ENCODE measurements at regions of chr7 and their contacts with region 1.

Region 1: DNA sequence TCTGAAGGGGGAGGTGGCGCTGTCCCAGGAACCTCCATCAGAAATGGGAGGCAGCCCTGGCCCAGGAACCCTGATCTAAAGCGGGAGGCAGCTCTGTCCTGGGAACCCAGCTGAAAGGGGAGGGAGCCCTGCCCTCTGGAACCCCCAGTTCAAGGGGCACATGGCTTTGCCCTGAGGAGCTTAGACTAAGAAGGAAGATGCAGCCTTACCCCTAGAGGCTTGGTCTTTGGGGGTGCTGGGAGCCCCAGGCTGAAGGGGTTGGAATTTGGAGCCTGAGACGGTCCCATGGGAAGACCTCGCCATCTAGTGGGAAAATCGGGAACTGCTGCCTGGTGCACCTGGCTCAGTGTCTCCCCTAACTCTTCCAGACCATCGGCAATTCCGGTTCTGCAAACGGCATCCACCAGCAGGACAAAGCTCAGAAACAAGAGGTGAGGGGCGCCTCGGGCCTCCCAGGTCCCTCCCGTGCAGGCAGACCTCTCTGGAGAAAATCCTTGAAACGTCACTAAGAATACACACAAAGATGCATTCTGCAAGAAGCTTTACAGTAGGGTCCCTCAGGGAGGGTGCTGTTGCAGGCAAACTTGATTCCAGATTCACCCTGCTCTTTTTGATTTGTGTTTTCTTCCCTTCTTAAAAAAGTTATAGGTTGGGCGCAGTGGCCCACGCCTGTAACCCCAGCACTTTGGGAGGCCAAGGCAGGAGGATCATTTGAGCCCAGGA is 52.4 kb upstream of the GTF2IRD1 start:
- ATAC-seq: peak; percentile 47 to 92 (median 65)
- H3K4me3 ChIP-seq: no peak overlapping the region
- H3K27ac ChIP-seq: no peak overlapping the region
- H3K4me1 ChIP-seq: no peaks in the 10 kb centered on the region

Region 2: DNA sequence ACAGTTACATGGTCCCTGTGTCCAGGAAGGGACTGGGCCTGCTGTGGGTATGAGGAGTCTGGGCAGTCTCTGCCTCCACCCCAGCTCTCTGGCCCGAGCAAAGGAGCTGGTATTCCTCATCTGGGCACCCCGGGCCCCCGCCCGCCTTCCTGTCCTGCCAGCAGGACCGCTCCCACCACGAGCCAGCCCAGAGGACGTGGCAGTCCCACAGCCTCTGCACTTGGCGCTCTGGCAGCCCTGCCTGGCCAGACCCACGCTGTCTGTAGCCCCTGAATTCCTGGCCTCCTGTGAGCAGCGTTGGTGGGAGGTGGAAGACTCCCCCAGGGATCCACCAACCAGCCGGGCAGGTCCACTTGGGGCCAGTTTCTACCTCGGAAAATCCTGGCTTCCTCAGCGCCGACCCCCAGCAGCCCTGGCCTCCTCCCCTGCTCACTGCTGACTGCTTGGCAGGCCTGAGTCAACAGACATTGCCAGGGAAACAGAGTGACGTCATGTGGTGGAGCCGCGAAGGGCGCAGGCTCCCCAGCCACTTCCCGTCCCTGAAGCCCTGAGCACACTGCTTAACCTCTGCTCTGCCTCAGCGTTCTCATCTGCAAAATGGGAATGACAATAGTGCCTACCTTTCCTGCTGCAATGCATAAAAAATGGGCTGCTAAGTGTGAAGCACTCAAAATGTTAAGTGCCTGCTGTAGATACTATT is 339.3 kb before region 1 on chr7:
- in situ Hi-C with region 1: loop called in 2 of 9 experiments (anchors 25 kb)
- ATAC-seq: peak; percentile 63 to 99 (median 88)
- H3K4me3 ChIP-seq: no peak overlapping the region
- H3K27ac ChIP-seq: no peak overlapping the region
- H3K4me1 ChIP-seq: no peaks in the 10 kb centered on the region

Region 3: GRCh38 chr7:74070619-74070921 is 330.7 kb before region 1 on chr7:
- in situ Hi-C with region 1: loop called in 3 of 9 experiments (anchors 10 to 25 kb)
- ATAC-seq: peak in 3 of 8 experiments; percentile 54 to 64 (median 56)
- H3K4me3 ChIP-seq: no peak overlapping the region
- H3K27ac ChIP-seq: no peak overlapping the region
- H3K4me1 ChIP-seq: no peaks in the 10 kb centered on the region

Region 4: DNA sequence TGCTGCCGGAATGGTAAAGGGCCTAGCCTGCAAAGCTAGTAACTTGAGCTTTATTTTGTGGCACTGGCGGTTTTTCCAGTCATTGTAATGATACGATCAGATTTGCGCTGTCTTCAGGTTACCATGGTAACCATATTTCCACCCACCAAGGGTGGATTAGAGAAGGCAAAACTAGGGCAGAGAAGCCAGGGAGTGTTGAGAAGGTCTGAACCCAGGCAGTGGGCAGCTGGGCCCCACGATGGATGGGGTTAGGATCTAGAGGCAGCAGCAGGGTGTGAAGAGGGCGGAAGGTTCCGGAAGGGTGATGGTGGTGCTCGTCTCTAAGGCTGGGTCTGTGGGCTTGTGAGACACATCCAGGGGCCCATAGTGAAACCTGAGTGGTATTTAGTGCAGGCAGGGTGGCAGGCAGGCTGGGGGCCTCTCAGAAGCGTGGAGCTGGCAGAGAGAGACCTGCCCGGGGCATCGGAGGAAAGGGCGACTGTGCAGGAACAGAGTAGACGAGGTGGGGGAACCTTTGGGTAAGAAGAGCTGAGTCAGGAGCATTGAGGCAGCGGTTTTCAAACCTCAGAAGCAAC is 168.3 kb after region 1 on chr7:
- in situ Hi-C with region 1: loop called in 1 of 9 experiments (anchors 25 kb)
- ATAC-seq: peak in 4 of 8 experiments; percentile 12 to 27 (median 22)
- H3K4me3 ChIP-seq: no peak overlapping the region
- H3K27ac ChIP-seq: peak overlapping the region in 1 of 2 donors; percentile 55
- H3K4me1 ChIP-seq: peaks cover 5 to 7% of the 10 kb centered on the region in 2 donors

Region 5: DNA sequence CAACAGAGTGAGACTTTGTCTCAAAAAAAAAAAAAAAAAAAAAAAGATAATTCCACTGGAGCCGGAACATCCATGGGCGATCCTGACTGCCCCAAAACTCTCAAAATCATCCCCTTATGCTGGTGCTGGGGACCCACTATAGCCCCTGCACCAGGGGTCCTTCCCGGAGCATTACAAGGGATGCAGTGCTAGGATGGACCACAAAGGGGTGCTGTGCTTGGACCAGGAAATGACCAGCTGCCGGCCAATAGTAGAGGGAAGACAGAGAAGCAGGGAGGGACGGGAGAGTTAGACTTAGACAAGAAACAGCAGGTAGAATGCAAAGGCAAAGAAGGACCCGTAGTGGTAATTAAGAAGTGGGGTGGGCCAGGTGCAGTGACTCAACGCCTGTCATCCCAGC is 631.8 kb after region 1 on chr7:
- in situ Hi-C with region 1: loop called in 1 of 9 experiments (anchors 25 kb)
- ATAC-seq: peak in 2 of 8 experiments; percentile 19 to 35
- H3K4me3 ChIP-seq: no peak overlapping the region
- H3K27ac ChIP-seq: no peak overlapping the region
- H3K4me1 ChIP-seq: no peaks in the 10 kb centered on the region

Measured in motor neuron (in vitro differentiated cells).